IMR-90 (cell line): ENCODE measurements at regions of chr3 and their contacts with region 1.

Region 1: GRCh38 chr3:40309925-40310695 is 603 bp downstream of the EIF1B start:
- DNase-seq: peak; percentile 41
- ATAC-seq: peak; percentile 19
- H3K4me3 ChIP-seq: peak overlapping the region; percentile 69
- H3K27ac ChIP-seq: peak overlapping the region; percentile 82
- H3K4me1 ChIP-seq: 0 out of 2 replicates have a peak, but pooled peaks cover 2% of the 10 kb centered on the region
- H3K27me3 ChIP-seq: no peaks in the 10 kb centered on the region
- CTCF ChIP-seq: no peak
- POLR2A ChIP-seq: no peak
- RAD21 ChIP-seq: no peak

Region 2: DNA sequence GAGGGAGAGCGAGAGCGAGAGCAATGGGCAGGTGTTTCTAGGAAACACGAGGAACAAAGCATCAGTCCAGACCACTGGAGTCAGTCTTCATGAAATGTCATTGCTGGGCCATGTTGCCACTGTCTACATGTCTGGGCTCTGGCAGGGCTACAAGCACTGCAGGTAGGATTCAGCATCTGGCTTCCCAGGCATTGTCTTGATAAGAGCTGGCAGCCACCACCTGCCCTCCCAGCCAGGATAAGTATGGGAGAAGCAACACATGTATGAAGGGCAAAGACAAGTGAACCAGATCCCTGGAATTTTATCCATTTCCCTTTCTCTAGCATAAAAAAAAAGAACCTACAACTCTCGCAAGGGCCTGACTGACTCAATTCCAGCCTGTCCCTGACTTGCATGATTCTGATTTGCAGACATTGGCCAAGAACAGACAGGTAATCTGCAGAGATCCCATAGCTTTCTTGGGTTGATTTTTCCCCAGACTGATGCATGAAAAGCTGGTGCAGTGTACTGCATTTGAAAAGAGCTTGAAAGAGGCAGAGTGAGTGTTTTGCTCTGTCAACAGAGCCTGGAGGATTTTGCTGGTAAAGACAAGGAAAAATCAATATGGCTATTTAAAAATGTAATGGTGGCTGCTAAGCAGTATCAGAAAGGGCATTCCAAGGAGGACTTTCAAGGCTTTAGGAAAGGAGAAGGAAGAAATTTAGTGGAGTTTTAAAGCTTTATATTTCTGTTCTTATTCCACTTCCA is 657.9 kb before region 1 on chr3:
- CTCF ChIA-PET with region 1: no interaction called
- POLR2A ChIA-PET with region 1: no interaction called
- dilution Hi-C with region 1: no loop called
- in situ Hi-C with region 1: no loop called
- intact Hi-C with region 1: no loop called
- DNase-seq: no peak
- ATAC-seq: no peak
- H3K4me3 ChIP-seq: no peak overlapping the region
- H3K27ac ChIP-seq: no peak overlapping the region
- H3K4me1 ChIP-seq: no peaks in the 10 kb centered on the region
- H3K27me3 ChIP-seq: no peaks in the 10 kb centered on the region
- CTCF ChIP-seq: no peak
- POLR2A ChIP-seq: no peak
- RAD21 ChIP-seq: no peak

Region 3: DNA sequence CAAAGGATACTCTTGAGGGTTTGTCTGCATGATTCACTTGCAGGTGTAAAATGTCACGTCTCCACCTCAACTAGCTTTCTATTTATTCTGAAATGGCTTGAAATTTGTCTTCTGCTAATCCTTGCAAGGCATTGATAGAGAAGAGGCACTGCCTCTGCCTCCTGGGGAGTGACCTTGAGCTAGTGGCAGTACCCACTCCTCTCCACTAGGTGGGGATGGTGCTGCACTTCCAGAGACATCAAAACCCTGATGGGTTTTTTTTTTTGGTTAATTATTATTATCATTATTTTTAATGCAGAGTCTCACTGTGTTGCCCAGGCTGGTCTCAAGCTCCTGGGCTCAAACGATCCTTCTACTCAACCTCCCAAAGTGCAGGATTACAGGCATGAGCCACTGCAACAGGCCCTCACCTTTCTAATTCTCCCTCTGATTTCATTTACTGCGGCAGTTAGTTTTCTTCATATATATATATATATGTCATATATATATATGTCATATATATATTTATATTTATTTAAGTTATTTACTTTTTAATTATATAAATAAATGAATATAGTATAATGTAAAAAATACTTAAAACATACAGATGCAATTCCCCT is 118.2 kb before region 1 on chr3:
- CTCF ChIA-PET with region 1: interaction called, 55 read pairs
- POLR2A ChIA-PET with region 1: no interaction called
- dilution Hi-C with region 1: no loop called
- in situ Hi-C with region 1: loop called (anchors 5 kb)
- intact Hi-C with region 1: no loop called
- DNase-seq: peak; percentile 51
- ATAC-seq: peak; percentile 99
- H3K4me3 ChIP-seq: no peak overlapping the region
- H3K27ac ChIP-seq: no peak overlapping the region
- H3K4me1 ChIP-seq: no peaks in the 10 kb centered on the region
- H3K27me3 ChIP-seq: no peaks in the 10 kb centered on the region; the same call in 1 of the 2 replicates
- CTCF ChIP-seq: peak; percentile 89
- POLR2A ChIP-seq: no peak
- RAD21 ChIP-seq: peak; percentile 85

Region 4: GRCh38 chr3:40290396-40290795 is 19.7 kb before region 1 on chr3:
- CTCF ChIA-PET with region 1: no interaction called
- POLR2A ChIA-PET with region 1: no interaction called
- dilution Hi-C with region 1: no loop called
- in situ Hi-C with region 1: no loop called
- intact Hi-C with region 1: no loop called
- DNase-seq: no peak
- ATAC-seq: no peak
- H3K4me3 ChIP-seq: no peak overlapping the region
- H3K27ac ChIP-seq: no peak overlapping the region
- H3K4me1 ChIP-seq: no peaks in the 10 kb centered on the region
- H3K27me3 ChIP-seq: no peaks in the 10 kb centered on the region
- CTCF ChIP-seq: no peak
- POLR2A ChIP-seq: no peak
- RAD21 ChIP-seq: no peak

Region 5: DNA sequence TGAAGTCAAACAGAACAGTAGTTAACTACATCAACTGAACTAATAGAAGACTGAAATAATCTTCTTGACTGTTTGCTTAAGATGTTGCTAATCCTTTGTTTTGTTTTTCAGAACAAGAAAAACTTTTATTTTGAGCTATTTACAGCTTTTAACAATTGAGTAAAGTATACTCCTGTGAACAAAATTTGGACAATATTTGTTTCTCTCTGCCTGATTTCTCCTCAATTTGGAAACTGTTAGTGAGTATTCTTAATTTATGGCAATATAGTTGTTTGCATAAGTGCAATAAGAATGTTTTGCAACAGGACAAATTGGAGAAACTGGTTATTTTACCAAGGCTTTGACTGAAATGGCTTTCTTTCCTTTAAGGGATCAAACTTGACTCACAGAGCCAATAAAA is 40.4 kb after region 1 on chr3:
- CTCF ChIA-PET with region 1: no interaction called
- POLR2A ChIA-PET with region 1: no interaction called
- dilution Hi-C with region 1: no loop called
- in situ Hi-C with region 1: no loop called
- intact Hi-C with region 1: no loop called
- DNase-seq: no peak
- ATAC-seq: no peak
- H3K4me3 ChIP-seq: no peak overlapping the region
- H3K27ac ChIP-seq: no peak overlapping the region
- H3K4me1 ChIP-seq: no peaks in the 10 kb centered on the region
- H3K27me3 ChIP-seq: no peaks in the 10 kb centered on the region
- CTCF ChIP-seq: no peak
- POLR2A ChIP-seq: no peak
- RAD21 ChIP-seq: no peak

Region 6: DNA sequence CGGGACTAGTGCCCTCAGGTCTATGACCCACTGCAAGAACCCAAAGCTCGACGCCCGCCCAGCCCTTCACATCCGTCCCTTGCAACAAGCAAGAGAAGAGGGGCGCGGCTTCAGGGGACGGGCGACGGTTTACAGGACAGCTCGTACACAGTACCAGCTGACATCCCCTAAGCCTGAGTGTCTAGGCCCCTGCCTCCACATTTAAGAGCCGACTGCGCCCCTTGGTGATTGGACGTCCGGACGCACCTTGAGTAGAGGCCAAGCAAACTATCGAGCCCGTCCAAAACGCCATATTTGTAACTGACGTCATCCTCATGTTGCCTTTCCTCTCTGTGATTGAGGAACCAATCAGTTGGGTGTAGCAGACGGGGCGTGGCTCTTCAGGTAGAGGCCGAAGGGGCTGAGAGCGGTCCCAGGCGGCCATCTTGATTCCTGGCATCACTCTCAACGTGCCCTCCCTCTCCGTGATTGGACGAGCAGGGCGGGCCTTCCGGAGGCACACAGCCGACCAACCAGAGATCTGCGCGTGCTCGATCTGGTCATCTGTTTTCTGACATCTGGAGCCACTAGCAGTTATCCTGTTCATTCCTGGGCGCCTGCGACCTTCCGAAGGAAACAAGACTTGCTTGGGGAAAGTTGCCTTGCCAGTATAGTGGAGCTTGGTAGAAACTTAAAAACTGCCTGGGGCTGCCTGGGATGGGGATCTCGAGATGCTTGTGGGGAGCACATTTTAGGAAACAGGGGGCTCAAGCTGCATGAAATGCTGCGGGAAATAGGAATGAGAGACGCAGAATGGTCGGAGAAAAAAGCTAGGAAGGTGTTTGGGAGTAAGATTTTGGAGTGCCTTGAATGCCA is 143.0 kb after region 1 on chr3:
- CTCF ChIA-PET with region 1: no interaction called
- POLR2A ChIA-PET with region 1: no interaction called
- dilution Hi-C with region 1: no loop called
- in situ Hi-C with region 1: no loop called
- intact Hi-C with region 1: loop called (anchors 5 kb)
- DNase-seq: peak; percentile 98
- ATAC-seq: peak; percentile 95
- H3K4me3 ChIP-seq: peak overlapping the region; percentile 72
- H3K27ac ChIP-seq: peak overlapping the region; percentile 81
- H3K4me1 ChIP-seq: no peaks in the 10 kb centered on the region
- H3K27me3 ChIP-seq: no peaks in the 10 kb centered on the region
- CTCF ChIP-seq: no peak
- POLR2A ChIP-seq: peak; percentile 59
- RAD21 ChIP-seq: no peak